B cell (primary cell): ENCODE measurements at regions of chr1 and their contacts with region 1.

Region 1: GRCh38 chr1:161045750-161046571 is at the start of gene USF1:
- DNase-seq: peak; percentile 98
- ATAC-seq: peak; percentile 67
- H3K4me3 ChIP-seq: peak within 1 kb of the TSS; percentile 67 to 100 (median 95)
- H3K4me3 Mint-ChIP-seq: peak within 1 kb of the TSS; percentile 99
- H3K27ac ChIP-seq: peak within 1 kb of the TSS; percentile 99
- H3K27ac Mint-ChIP-seq: peak within 1 kb of the TSS; percentile 100
- H3K4me1 ChIP-seq: peaks cover 43 to 67% of the 10 kb centered on the region in 2 donors
- H3K4me1 Mint-ChIP-seq: peaks cover 67% of the 10 kb centered on the region
- H3K27me3 ChIP-seq: no peaks in the 10 kb centered on the region
- H3K27me3 Mint-ChIP-seq: no peaks in the 10 kb centered on the region
- CTCF ChIP-seq: no peak
- total RNA-seq, gene USF1: 192 and 196 TPM in 2 replicates

Region 2: GRCh38 chr1:159924981-159925712 is 1120.8 kb before region 1 on chr1 and contains the start of gene TAGLN2:
- CTCF ChIA-PET with region 1: no interaction called
- POLR2A ChIA-PET with region 1: no interaction called
- intact Hi-C with region 1: loop called (anchors 10 kb)
- DNase-seq: peak; percentile 93
- ATAC-seq: peak; percentile 65
- H3K4me3 ChIP-seq: peak within 1 kb of the TSS; percentile 81 to 100 (median 99)
- H3K4me3 Mint-ChIP-seq: peak within 1 kb of the TSS; percentile 96
- H3K27ac ChIP-seq: peak within 1 kb of the TSS; percentile 98 to 100
- H3K27ac Mint-ChIP-seq: peak within 1 kb of the TSS; percentile 99
- H3K4me1 ChIP-seq: peaks cover 40 to 45% of the 10 kb centered on the region in 2 donors
- H3K4me1 Mint-ChIP-seq: peaks cover 50% of the 10 kb centered on the region
- H3K27me3 ChIP-seq: no peaks in the 10 kb centered on the region
- H3K27me3 Mint-ChIP-seq: no peaks in the 10 kb centered on the region
- CTCF ChIP-seq: no peak
- total RNA-seq, gene TAGLN2: 342 and 354 TPM in 2 replicates

Region 3: DNA sequence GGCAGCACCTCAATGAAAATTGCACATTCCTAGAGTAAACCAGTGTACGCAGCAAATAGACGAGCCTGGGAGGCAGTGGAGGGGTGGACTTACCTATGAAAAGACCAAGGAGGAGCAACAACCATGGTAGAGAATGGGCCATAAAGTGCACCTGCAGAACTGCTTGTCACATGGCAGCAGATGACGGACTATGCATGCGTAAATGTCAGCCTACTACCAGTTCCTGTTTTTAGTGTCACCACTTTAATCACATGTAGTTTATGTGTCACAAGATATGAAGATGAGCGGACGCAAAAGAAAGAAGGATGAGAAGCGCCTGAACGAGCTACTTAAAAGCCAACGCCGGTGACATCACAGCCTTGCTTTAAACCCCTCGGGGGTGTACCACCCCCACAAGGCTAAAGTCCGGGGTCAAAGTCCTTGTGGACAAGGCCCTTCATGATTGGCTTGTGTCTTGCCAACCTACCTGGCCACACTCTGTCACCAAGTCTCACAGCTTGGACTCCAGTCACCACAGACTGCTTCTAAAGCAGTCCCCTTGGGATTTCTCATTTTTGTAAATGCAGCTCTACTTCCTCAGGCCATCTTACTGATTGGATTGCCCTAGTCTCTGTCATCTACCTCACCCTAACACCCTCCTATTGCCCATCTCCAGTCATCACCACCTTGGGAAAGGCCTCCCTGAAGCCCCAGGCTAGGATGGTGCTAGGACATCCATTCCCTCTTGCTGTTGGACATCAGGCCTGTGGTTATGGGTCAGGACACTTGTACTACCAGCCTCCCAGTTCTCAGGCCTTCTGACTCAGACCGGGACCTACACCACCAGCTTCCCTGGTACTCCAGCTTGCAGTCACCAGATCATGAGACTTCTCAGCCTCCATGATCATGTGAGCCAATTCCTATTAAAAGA is 256.0 kb before region 1 on chr1:
- CTCF ChIA-PET with region 1: no interaction called
- POLR2A ChIA-PET with region 1: no interaction called
- intact Hi-C with region 1: loop called (anchors 1 kb)
- DNase-seq: peak; percentile 98
- ATAC-seq: peak; percentile 77
- H3K4me3 ChIP-seq: peak overlapping the region in 1 of 5 experiments; percentile 19
- H3K4me3 Mint-ChIP-seq: peak overlapping the region; percentile 68
- H3K27ac ChIP-seq: peak overlapping the region; percentile 99
- H3K27ac Mint-ChIP-seq: peak overlapping the region; percentile 98
- H3K4me1 ChIP-seq: peaks cover 28 to 34% of the 10 kb centered on the region in 2 donors
- H3K4me1 Mint-ChIP-seq: peaks cover 42% of the 10 kb centered on the region
- H3K27me3 ChIP-seq: no peaks in the 10 kb centered on the region
- H3K27me3 Mint-ChIP-seq: no peaks in the 10 kb centered on the region
- CTCF ChIP-seq: no peak

Region 4: DNA sequence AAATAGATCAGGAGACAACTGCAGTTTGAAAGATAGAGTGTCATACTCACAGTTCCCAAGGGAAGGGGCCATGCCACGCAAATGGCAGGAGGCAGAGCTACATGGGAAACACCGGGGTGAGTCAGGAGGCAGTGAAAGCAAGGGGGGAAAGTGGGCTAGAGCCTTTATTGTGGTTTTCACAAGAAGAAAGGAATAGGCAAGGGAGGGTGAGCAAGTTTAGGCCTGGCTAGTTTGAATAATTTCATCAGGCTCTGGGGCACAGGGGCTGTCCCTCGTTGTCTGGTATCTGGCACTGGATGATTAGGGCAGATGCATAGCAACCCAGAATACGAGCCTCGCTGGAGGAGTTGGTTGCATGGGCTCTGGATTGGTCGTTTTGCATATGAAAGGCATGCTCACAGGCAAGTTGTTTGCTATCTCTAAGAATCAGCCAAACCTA is 74.3 kb before region 1 on chr1:
- CTCF ChIA-PET with region 1: no interaction called
- POLR2A ChIA-PET with region 1: no interaction called
- intact Hi-C with region 1: no loop called
- DNase-seq: no peak
- ATAC-seq: peak; percentile 33
- H3K4me3 ChIP-seq: no peak overlapping the region
- H3K4me3 Mint-ChIP-seq: no peak overlapping the region
- H3K27ac ChIP-seq: no peak overlapping the region
- H3K27ac Mint-ChIP-seq: no peak overlapping the region
- H3K4me1 ChIP-seq: no peaks in the 10 kb centered on the region
- H3K4me1 Mint-ChIP-seq: no peaks in the 10 kb centered on the region
- H3K27me3 ChIP-seq: peaks cover 0 to 3% (median 0%) of the 10 kb centered on the region in 4 experiments
- H3K27me3 Mint-ChIP-seq: peaks cover 15% of the 10 kb centered on the region
- CTCF ChIP-seq: no peak

Region 5: DNA sequence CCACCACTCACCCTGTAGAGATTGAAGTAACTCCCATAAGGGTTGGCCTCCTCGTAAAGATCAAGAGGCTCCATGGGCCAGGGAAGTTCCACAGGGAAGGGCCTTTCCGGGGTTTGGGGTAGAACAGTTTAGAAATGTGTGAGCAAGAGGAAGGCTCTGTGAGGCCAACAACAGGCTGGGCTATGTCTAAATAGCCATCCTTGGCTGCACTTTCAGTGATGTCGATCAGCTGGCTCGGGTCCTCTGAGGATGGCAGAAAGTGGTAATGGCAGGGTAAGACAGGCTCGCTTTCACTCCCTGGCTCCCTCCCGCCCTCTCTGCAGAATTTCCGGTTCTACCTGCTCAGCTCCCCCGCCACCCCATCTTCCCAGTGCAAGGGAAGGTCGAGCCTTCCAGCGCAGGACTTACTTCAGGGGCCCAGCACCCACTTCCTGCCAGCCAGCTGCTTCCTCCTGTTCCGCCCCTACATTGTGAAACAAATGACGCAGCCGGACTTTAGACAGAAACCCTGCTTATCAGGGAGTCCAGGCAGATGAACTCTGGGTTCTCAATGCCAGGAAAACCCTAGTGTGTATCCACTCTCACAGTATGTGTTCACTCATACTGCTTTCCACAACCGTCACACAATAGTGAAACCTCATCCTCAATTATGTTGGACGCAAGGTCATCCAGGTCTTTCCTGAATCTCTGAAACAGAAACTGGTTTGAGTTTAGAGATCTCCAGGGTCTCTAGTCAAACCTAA is 32.3 kb before region 1 on chr1:
- CTCF ChIA-PET with region 1: interaction called, 22 read pairs
- POLR2A ChIA-PET with region 1: interaction called, 27 read pairs
- intact Hi-C with region 1: loop called (anchors 1 kb)
- DNase-seq: peak; percentile 80
- ATAC-seq: peak; percentile 83
- H3K4me3 ChIP-seq: peak overlapping the region; percentile 20 to 65 (median 52)
- H3K4me3 Mint-ChIP-seq: peak overlapping the region; percentile 89
- H3K27ac ChIP-seq: peak overlapping the region; percentile 76 to 86
- H3K27ac Mint-ChIP-seq: peak overlapping the region; percentile 99
- H3K4me1 ChIP-seq: peaks cover 19 to 25% of the 10 kb centered on the region in 2 donors
- H3K4me1 Mint-ChIP-seq: peaks cover 22% of the 10 kb centered on the region
- H3K27me3 ChIP-seq: no peaks in the 10 kb centered on the region
- H3K27me3 Mint-ChIP-seq: no peaks in the 10 kb centered on the region
- CTCF ChIP-seq: no peak

Region 6: GRCh38 chr1:161071886-161072371 is 26.0 kb after region 1 on chr1:
- CTCF ChIA-PET with region 1: interaction called, 127 read pairs
- POLR2A ChIA-PET with region 1: interaction called, 108 read pairs
- intact Hi-C with region 1: loop called (anchors 1 kb)
- DNase-seq: peak; percentile 71
- ATAC-seq: no peak
- H3K4me3 ChIP-seq: no peak overlapping the region
- H3K4me3 Mint-ChIP-seq: no peak overlapping the region
- H3K27ac ChIP-seq: no peak overlapping the region
- H3K27ac Mint-ChIP-seq: peak overlapping the region; percentile 12
- H3K4me1 ChIP-seq: peaks cover 20 to 35% of the 10 kb centered on the region in 2 donors
- H3K4me1 Mint-ChIP-seq: peaks cover 37% of the 10 kb centered on the region
- H3K27me3 ChIP-seq: no peaks in the 10 kb centered on the region
- H3K27me3 Mint-ChIP-seq: no peaks in the 10 kb centered on the region
- CTCF ChIP-seq: peak; percentile 81

Region 7: GRCh38 chr1:161117759-161118581 is 72.0 kb after region 1 on chr1 and contains the starts of genes NIT1 and PFDN2:
- CTCF ChIA-PET with region 1: interaction called, 5 read pairs
- POLR2A ChIA-PET with region 1: interaction called, 4 read pairs
- intact Hi-C with region 1: loop called (anchors 2 kb)
- DNase-seq: peak; percentile 90
- ATAC-seq: peak; percentile 84
- H3K4me3 ChIP-seq: peak within 1 kb of the TSS; percentile 71 to 98 (median 97)
- H3K4me3 Mint-ChIP-seq: peak within 1 kb of the TSS; percentile 97
- H3K27ac ChIP-seq: peak within 1 kb of the TSS; percentile 86 to 89
- H3K27ac Mint-ChIP-seq: peak within 1 kb of the TSS; percentile 94
- H3K4me1 ChIP-seq: peaks cover 45 to 54% of the 10 kb centered on the region in 2 donors
- H3K4me1 Mint-ChIP-seq: peaks cover 78% of the 10 kb centered on the region
- H3K27me3 ChIP-seq: no peaks in the 10 kb centered on the region
- H3K27me3 Mint-ChIP-seq: no peaks in the 10 kb centered on the region
- CTCF ChIP-seq: no peak
- total RNA-seq, gene NIT1: 53.5 and 56.1 TPM in 2 replicates
- total RNA-seq, gene PFDN2: 29.9 and 32.3 TPM in 2 replicates